Naive thymus-derived CD8-positive, alpha-beta T cell (primary cell): ENCODE measurements at regions of chr17 and their contacts with region 1.

Region 1: GRCh38 chr17:80454557-80455335 is 21.7 kb downstream of the NPTX1 start:
- DNase-seq: peak; percentile 94 to 97 (median 96)
- ATAC-seq: peak; percentile 91 to 93
- H3K4me3 Mint-ChIP-seq: peak overlapping the region; percentile 86 to 95 (median 91)
- H3K27ac Mint-ChIP-seq: peak overlapping the region; percentile 92 to 98 (median 98)
- H3K4me1 Mint-ChIP-seq: peaks cover 7 to 24% (median 18%) of the 10 kb centered on the region in 4 donors
- H3K27me3 Mint-ChIP-seq: peaks cover 8 to 28% (median 13%) of the 10 kb centered on the region in 5 donors

Region 2: DNA sequence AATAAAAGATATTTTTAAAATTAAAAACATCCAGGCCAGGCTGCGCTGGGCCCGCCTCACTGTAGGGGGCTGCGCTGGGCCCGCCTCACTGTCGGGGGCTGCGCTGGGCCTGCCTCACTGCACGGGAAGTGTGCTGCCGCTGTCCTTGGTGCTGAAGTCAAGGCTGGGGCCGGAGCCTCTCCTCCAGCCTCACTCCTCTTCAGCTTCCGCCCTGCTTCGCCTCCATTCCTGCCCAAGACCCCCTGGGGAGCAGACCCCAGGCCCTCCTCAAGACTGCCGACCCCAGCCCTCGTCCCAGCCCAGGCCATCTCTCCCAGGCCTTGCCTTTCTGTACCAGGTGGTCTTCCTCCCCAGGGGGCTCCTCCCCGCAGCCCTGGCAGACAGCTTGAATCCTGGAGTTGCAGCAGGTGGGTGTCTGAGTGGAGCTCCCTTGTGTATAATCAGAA is 13.6 kb before region 1 on chr17:
- POLR2A ChIA-PET with region 1: interaction called, 13 read pairs
- DNase-seq: peak; percentile 10 to 80 (median 51)
- ATAC-seq: peak; percentile 61 to 91
- H3K4me3 Mint-ChIP-seq: peak overlapping the region in 1 of 10 donors; percentile 24
- H3K27ac Mint-ChIP-seq: no peak overlapping the region
- H3K4me1 Mint-ChIP-seq: peaks cover 0 to 5% (median 0%) of the 10 kb centered on the region in 4 donors
- H3K27me3 Mint-ChIP-seq: peaks cover 2 to 25% (median 3%) of the 10 kb centered on the region in 5 donors

Region 3: GRCh38 chr17:80474231-80474960 is 19.6 kb after region 1 on chr17:
- POLR2A ChIA-PET with region 1: interaction called, 15 read pairs
- DNase-seq: peak in 1 of 10 donors; percentile 31
- ATAC-seq: peak; percentile 9 to 26
- H3K4me3 Mint-ChIP-seq: peak overlapping the region; percentile 63 to 87 (median 80)
- H3K27ac Mint-ChIP-seq: peak overlapping the region in 2 of 10 donors; percentile 33 to 50
- H3K4me1 Mint-ChIP-seq: peaks cover 20 to 37% (median 31%) of the 10 kb centered on the region in 4 donors
- H3K27me3 Mint-ChIP-seq: peaks cover 16 to 61% (median 37%) of the 10 kb centered on the region in 5 donors

Region 4: DNA sequence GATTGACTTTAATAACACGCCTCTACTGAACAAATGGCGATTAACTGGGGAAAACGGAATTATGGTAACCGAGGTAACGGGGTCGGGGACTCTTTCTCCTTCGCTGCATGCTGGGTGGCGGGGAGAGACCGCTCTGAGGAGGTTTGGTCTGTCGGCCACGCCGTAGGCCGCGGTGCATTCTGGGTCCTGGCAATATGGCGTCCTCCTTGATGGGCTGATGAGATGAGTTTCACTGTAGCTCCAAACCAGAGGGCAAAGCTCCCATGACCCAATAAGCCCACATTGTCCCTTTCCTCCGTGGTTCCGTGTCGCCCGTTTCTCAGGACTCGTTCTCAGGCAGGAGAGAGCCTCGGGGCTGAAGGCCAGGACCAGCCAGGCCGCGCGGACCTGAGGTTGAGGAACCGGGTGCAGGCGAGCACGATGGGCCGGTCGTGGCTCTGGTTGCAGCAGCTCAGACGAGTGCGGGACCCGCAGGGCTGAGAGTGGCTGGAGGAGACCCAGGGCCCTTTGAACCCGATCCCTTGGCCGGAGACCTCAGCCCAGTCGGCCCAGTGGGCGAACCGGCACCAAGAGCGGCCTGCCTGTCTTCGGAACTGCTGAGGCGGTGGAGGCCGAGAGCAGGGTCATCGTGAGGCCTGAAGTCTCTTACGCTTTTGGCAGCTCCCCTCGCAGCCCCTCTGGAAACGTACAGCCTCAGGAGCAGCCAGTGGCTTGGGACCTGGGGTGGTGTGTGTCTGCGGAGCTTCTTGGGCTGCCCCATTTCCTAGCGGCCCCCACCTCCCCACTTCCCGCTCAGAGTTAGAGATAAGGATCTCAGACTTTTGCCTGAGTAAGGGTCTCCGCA is 90.1 kb after region 1 on chr17 and contains the start of gene RPTOR:
- POLR2A ChIA-PET with region 1: interaction called, 16 read pairs
- DNase-seq: peak; percentile 76 to 94 (median 86)
- ATAC-seq: peak; percentile 99 to 100
- H3K4me3 Mint-ChIP-seq: peak within 1 kb of the TSS; percentile 88 to 98 (median 94)
- H3K27ac Mint-ChIP-seq: peak within 1 kb of the TSS; percentile 77 to 97 (median 94)
- H3K4me1 Mint-ChIP-seq: peaks cover 12 to 37% (median 31%) of the 10 kb centered on the region in 4 donors
- H3K27me3 Mint-ChIP-seq: peaks cover 0 to 14% (median 3%) of the 10 kb centered on the region in 5 donors
- polyA plus RNA-seq, gene RPTOR: 5.3 to 10.2 (median 5.5) TPM

Region 5: DNA sequence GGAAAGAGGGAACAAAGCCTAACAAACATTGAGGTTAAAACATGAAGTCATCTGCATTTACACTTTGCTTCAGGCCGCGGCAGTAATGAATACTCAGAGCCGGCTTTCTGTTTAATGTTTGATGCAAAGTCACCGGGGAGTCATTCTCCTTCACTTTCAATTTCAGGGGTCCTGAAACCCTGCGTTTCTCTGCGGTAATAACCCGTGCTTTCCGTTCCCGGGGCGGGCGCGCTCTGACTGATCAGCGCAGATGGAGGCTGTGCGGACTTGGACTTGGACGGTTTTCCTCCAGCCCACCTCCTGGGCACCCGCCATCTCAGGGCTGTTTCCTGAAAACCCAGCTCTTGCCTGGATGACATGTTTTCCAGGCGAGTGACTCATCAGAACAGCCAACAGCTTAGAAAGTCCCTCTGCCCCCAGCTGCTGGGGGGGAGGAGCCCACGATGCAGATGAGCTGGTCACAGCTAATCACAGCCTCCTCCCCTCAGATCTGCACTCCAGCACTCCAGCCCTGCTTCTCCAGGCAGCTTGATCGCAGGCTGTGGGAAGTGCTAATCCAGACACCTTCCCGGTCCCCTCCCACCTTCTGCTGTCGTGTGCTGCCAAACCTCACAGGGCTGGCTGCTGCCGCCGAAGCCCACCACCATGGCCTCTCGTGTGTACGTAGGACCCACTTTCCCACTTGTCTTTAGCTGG is 378.3 kb after region 1 on chr17:
- POLR2A ChIA-PET with region 1: interaction called, 10 read pairs
- DNase-seq: peak; percentile 41 to 81 (median 64)
- ATAC-seq: peak; percentile 91
- H3K4me3 Mint-ChIP-seq: peak overlapping the region; percentile 74 to 93 (median 88)
- H3K27ac Mint-ChIP-seq: peak overlapping the region; percentile 91 to 97 (median 94)
- H3K4me1 Mint-ChIP-seq: peaks cover 11 to 43% (median 33%) of the 10 kb centered on the region in 4 donors
- H3K27me3 Mint-ChIP-seq: no peaks in the 10 kb centered on the region